A673 (cell line): ENCODE measurements at regions of chr10 and their contacts with region 1.

Region 1: DNA sequence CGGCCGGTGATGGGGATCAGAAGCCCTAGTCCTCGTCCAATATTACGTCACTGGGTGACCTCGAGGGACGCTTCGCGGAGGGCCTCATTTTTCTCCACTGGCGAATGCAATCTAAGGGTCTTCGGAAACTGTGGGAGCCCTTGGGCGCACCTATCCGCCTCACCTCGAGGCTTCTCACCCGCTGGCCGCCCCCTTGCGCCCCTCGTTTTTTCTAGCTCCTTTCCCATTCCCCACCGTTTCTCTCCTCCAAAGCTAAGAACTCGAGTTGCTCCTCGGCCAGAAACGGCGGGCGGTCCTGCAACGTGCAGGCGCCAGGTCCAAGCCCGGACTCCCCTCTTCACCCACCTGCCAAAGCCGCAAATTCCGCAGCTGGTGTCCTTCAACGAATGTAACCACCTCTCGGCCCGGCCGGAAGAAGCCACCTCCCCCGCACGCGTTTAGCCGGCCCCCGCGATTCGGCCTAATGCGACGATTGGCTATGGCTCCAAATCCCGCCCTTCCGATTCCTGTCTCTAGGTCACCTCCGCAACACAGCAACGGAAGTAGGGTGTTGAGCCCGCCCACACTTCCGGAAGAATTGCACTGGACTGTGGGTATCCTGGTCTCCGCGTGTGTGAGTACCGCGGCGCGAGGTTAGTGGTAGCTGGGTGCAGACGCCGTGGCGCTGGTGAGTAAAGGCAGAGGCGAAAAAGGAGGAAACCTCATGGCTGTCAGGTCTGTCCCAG is at the starts of genes ATP5MK and PDCD11:
- DNase-seq: peak; percentile 99
- H3K4me3 ChIP-seq: peak within 1 kb of the TSS; percentile 80
- H3K27ac ChIP-seq: peak within 1 kb of the TSS; percentile 87
- H3K4me1 ChIP-seq: peaks cover 21% of the 10 kb centered on the region
- H3K27me3 ChIP-seq: no peaks in the 10 kb centered on the region
- CTCF ChIP-seq: peak; percentile 40; the same call in 1 of the 2 replicates
- total RNA-seq, gene ATP5MK: 393 and 426 TPM in 2 replicates
- total RNA-seq, gene PDCD11: 68.6 and 78.1 TPM in 2 replicates

Region 2: GRCh38 chr10:103307594-103307993 is 88.6 kb before region 1 on chr10:
- CTCF ChIA-PET with region 1: no interaction called
- POLR2A ChIA-PET with region 1: interaction called, 16 read pairs
- intact Hi-C with region 1: no loop called
- DNase-seq: no peak
- H3K4me3 ChIP-seq: no peak overlapping the region
- H3K27ac ChIP-seq: no peak overlapping the region
- H3K4me1 ChIP-seq: no peaks in the 10 kb centered on the region
- H3K27me3 ChIP-seq: no peaks in the 10 kb centered on the region
- CTCF ChIP-seq: no peak

Region 3: DNA sequence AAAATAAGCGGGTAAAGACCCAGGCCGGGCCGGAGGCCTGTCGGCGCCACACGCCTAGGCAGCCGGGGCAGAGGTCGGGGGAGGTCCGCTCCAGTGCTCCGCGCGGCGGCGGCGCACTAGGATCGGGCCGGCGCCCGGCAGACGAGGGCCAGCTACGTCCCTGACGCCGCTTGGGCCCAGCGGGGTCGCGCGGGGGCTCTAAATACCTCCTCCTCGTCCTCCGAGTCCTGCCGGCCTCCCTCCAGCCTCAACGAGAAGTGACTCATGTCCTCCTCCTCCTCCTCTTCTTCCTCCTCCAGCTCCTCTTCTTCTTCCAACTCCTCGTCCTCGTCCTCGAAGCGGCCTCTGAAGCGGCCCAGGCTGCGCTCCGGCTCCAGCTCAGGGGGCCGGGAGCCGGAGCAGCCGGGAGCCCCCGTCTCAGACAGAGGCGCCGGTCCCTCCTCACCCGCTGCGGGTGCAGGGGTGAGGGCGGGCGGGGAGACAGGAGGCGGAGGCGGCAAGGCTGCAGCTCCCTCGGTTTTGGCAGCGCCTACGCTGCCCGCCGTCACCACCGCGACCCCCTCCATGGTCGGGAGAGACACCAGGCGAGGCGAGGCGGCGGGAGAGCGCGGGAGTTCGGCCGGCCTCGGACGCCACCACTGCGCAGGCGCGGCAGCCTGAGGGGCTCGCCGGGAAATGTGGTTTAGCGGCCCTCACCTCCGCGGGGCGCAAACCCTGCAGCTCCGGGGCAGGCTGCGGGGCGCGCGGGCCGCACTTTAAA is 45.5 kb before region 1 on chr10 and contains the start of gene PCGF6:
- CTCF ChIA-PET with region 1: no interaction called
- POLR2A ChIA-PET with region 1: no interaction called
- intact Hi-C with region 1: loop called (anchors 2 kb)
- DNase-seq: peak; percentile 91
- H3K4me3 ChIP-seq: peak within 1 kb of the TSS; percentile 81
- H3K27ac ChIP-seq: peak within 1 kb of the TSS; percentile 90
- H3K4me1 ChIP-seq: peaks cover 10% of the 10 kb centered on the region
- H3K27me3 ChIP-seq: no peaks in the 10 kb centered on the region
- CTCF ChIP-seq: no peak
- total RNA-seq, gene PCGF6: 22.5 and 25.3 TPM in 2 replicates

Region 4: DNA sequence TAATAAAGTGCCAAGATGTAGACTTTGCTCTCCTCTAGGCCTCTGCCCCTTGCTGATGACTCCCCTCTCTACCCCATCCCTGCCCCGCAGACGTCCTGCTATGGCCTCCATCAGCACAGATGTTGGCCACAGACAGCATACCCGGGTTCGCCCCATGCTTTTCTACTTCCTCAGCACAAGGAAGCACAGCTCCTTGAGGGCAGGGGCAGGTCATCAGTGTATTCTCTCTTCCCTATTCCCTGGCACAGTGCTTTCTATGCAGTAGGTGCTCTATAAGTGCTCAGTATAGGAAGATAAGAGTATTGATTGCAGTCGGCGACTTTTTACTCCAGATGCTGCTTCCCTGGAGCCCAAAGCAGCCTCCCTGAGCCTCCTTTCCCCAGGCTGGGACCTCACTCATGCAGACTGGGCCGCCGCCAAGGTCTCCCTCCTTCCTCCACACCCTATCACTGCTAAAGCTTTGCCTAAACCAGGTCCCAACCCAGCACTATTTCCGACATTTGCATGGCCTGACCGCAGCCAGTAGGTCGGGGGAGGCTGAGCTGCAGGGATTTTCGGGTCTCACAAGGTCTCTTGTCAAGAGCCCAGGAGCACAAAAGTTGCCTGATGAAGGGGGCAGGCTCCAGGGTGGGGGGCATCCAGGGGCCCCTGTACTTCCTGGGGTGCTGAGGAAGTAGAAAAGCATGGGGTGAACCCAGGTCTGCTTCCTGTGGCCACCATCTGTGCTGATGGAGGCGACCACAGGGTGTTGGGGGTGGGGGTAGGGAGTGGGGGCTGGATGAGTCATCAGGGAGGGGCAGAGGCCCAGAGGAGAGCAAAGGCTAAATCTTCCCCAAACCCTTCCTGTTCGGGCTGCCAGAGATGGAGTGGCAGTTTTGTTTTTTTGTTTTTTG is 74.8 kb after region 1 on chr10:
- CTCF ChIA-PET with region 1: no interaction called
- POLR2A ChIA-PET with region 1: no interaction called
- intact Hi-C with region 1: no loop called
- DNase-seq: no peak
- H3K4me3 ChIP-seq: no peak overlapping the region
- H3K27ac ChIP-seq: no peak overlapping the region
- H3K4me1 ChIP-seq: no peaks in the 10 kb centered on the region
- H3K27me3 ChIP-seq: no peaks in the 10 kb centered on the region
- CTCF ChIP-seq: no peak

Region 5: GRCh38 chr10:103548581-103549348 is 152.5 kb after region 1 on chr10:
- CTCF ChIA-PET with region 1: no interaction called
- POLR2A ChIA-PET with region 1: no interaction called
- intact Hi-C with region 1: no loop called
- DNase-seq: no peak
- H3K4me3 ChIP-seq: no peak overlapping the region
- H3K27ac ChIP-seq: no peak overlapping the region
- H3K4me1 ChIP-seq: peaks cover 13% of the 10 kb centered on the region
- H3K27me3 ChIP-seq: no peaks in the 10 kb centered on the region
- CTCF ChIP-seq: no peak